HEK293 (cell line): ENCODE measurements at regions of chr1 and their contacts with region 1.

Region 1: DNA sequence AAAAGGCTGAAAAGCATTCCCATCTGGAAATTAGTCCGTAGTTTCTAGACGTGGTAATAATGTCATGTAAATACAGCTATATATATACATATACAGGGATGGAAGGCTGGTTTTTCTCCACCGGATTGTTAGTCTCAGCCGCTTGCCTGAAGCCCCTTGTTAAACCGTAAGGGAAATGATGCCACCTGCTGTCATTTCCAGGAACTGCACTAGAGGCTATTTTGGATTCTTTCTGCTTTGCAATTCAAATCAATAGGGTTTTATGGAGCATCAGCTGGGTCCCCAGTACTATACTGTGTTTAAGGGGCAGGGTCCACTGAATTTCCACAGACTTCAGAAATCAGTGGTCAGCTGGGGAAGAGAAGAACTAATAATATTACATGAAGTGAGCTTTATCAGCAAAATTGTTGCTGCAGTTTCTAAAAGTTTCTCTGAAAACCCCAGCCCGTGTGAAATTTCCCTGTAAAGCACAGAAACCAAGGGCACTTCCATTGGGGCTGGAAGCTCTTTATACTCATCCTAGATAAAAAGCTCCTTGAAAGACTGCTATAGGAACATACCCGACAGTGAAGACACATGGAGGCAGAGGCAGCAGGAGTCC is 33.8 kb upstream of the MPZL1 start:
- H3K4me3 ChIP-seq: no peak overlapping the region
- H3K27ac ChIP-seq: no peak overlapping the region
- H3K4me1 ChIP-seq: no peaks in the 10 kb centered on the region
- CTCF ChIP-seq: peak; percentile 73

Region 2: DNA sequence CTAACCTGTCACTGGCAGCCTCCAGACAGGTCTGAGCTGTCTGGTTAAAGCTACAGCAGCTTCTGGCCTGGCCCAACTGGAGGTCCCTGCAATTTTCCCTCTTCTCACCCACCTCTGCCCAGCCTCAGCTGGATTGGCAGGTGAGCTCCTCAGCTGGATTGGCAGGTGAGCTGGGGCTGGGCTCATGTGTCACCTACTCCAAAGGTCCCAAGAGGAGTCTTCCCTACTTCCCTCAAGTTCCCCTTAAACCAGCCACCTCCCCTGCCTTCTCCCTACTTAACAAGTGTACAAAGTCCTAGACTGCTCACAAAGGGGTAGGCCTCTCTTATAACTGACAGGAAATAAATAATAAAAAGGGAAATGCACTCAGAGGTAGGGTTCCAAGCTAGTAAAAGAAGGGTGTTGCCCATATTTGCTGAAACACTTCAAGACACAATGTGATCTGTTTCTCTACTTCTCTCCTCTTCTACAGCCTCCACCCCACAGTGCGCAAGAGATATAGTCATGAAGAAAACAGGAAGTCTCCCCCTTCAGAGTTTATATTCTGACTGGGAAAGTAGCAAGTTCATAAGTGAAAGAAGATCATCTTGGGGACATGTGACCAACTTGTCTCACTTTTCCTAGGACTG is 597.6 kb before region 1 on chr1 and contains the start of gene GPA33:
- CTCF ChIA-PET with region 1: no interaction called
- POLR2A ChIA-PET with region 1: no interaction called
- H3K4me3 ChIP-seq: no peak within 1 kb of the TSS
- H3K27ac ChIP-seq: no peak within 1 kb of the TSS
- H3K4me1 ChIP-seq: no peaks in the 10 kb centered on the region
- CTCF ChIP-seq: no peak

Region 3: DNA sequence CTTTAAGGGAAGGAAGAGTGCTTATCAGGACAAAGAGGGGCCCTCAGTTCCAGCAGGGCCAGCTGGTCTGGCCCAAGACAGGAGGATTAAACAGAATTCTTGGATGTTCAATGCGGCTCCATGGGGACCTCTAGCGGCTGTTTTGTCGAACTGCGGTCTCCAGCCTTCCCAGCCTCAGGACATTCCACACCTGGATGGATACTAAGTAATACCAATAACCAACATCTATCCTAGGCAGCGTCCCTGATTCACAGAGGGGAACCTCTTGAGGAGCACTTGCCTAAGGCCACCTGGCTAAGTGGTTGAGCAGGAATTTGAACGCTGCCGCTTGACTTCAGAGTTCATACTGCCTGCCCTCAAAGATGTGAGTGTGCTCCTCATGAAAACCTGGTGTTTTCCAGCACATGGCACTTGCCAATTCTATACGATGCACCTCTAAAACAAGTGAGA is 154.1 kb before region 1 on chr1:
- CTCF ChIA-PET with region 1: interaction called, 10 read pairs
- POLR2A ChIA-PET with region 1: no interaction called
- H3K4me3 ChIP-seq: no peak overlapping the region
- H3K27ac ChIP-seq: no peak overlapping the region
- H3K4me1 ChIP-seq: no peaks in the 10 kb centered on the region
- CTCF ChIP-seq: peak; percentile 75

Region 4: GRCh38 chr1:167553136-167554027 is 134.6 kb before region 1 on chr1 and contains the start of gene CREG1:
- CTCF ChIA-PET with region 1: interaction called, 25 read pairs
- POLR2A ChIA-PET with region 1: interaction called, 8 read pairs
- H3K4me3 ChIP-seq: peak within 1 kb of the TSS; percentile 67
- H3K27ac ChIP-seq: peak within 1 kb of the TSS; percentile 57; the same call in 1 of the 2 replicates
- H3K4me1 ChIP-seq: no peaks in the 10 kb centered on the region
- CTCF ChIP-seq: no peak

Region 5: GRCh38 chr1:167594822-167595221 is 93.2 kb before region 1 on chr1:
- CTCF ChIA-PET with region 1: interaction called, 39 read pairs
- POLR2A ChIA-PET with region 1: no interaction called
- H3K4me3 ChIP-seq: no peak overlapping the region
- H3K27ac ChIP-seq: no peak overlapping the region
- H3K4me1 ChIP-seq: no peaks in the 10 kb centered on the region
- CTCF ChIP-seq: no peak

Region 6: GRCh38 chr1:167676205-167676915 is 11.7 kb before region 1 on chr1:
- CTCF ChIA-PET with region 1: interaction called, 21 read pairs
- POLR2A ChIA-PET with region 1: no interaction called
- H3K4me3 ChIP-seq: no peak overlapping the region
- H3K27ac ChIP-seq: no peak overlapping the region
- H3K4me1 ChIP-seq: 0 out of 2 replicates have a peak, but pooled peaks cover 3% of the 10 kb centered on the region
- CTCF ChIP-seq: no peak